HepG2 (cell line): ENCODE measurements at regions of chr1 and their contacts with region 1.

Region 1: DNA sequence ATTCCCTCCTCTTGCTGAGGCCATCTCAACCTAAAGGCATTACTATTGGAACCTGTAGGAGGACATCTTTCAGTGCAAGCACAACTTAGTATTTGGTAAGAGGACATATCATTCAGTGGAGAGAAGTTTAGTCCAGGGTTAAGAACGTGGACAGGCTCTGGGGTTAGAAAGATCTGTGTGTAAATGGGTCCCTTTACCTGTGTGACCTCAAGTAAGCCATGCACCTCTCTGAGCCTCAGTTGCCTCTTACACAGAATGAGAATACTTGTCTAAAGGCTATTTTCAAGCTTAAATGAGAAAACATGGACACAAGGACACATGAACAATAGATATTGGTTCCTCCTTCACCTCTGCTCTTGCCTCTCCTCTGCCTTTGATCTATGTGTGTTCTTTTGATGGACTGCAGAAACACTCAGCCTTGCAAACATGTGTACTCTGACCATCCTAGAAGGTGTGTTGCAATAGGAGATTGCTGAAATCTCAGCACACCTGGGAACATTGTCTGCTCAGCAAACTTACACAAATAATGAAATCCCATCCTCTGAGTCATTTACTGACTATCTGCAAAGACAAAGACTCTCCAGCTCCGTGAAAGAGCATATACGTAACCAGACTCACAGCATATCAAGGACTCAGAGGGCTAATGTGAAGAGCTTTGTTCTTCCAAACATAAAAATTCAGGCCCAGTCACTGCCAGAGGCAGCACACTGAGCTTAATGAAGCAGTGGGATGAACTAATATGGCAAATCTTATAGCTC is 143.8 kb downstream of the DAB1 start:
- DNase-seq: peak; percentile 100
- ATAC-seq: peak; percentile 95
- H3K4me3 ChIP-seq: peak overlapping the region in 1 of 3 experiments; percentile 7; a peak in 1 of 6 replicates
- H3K27ac ChIP-seq: peak overlapping the region; percentile 90
- H3K4me1 ChIP-seq: peaks cover 54% of the 10 kb centered on the region
- H3K27me3 ChIP-seq: no peaks in the 10 kb centered on the region
- CTCF ChIP-seq: no peak
- EP300 ChIP-seq: peak; percentile 99 to 100
- POLR2A ChIP-seq: peak in 1 of 2 experiments; percentile 63; a peak in 1 of 4 replicates
- RAD21 ChIP-seq: no peak

Region 2: DNA sequence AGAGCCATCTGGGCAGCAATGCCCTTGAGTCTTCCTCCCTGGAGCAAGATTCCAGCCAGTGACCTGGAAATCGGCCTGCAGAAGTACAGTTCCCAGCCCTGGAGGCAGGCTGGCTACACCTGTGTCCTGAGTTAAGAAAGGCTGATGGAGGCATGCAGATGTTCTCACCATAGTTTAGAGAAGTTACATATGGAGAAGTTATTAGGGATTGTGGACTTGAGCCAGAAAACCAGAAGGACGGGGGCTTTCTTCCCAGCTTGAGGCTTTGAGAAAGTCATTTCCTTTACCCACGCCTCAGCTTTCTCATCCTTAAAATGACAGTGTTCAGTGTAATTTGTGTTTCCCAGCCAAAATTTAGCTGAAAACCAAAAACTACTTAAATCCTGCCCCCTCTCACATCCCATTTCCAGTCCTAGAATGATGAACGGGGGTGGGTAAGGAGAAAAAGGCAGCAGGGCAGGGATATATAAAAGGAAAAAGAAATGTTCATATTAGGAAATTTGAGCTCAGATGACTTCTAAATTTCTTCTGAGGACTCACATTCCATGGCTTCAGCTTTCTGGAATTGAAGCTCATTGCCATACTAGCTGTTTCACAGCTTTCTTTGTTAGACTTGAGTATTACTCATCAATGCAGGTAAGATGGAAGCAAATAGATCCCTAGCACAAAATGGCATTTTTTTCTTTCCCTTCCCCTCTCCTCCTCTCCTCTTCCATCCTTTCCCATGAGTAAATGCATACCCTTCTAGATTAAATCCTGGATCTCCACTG is 299.9 kb before region 1 on chr1:
- CTCF ChIA-PET with region 1: no interaction called
- POLR2A ChIA-PET with region 1: no interaction called
- in situ Hi-C with region 1: no loop called
- intact Hi-C with region 1: loop called (anchors 10 kb)
- DNase-seq: no peak
- ATAC-seq: no peak
- H3K4me3 ChIP-seq: no peak overlapping the region
- H3K27ac ChIP-seq: no peak overlapping the region
- H3K4me1 ChIP-seq: peaks cover 1% of the 10 kb centered on the region
- H3K27me3 ChIP-seq: no peaks in the 10 kb centered on the region
- CTCF ChIP-seq: no peak
- EP300 ChIP-seq: no peak
- POLR2A ChIP-seq: no peak
- RAD21 ChIP-seq: no peak

Region 3: DNA sequence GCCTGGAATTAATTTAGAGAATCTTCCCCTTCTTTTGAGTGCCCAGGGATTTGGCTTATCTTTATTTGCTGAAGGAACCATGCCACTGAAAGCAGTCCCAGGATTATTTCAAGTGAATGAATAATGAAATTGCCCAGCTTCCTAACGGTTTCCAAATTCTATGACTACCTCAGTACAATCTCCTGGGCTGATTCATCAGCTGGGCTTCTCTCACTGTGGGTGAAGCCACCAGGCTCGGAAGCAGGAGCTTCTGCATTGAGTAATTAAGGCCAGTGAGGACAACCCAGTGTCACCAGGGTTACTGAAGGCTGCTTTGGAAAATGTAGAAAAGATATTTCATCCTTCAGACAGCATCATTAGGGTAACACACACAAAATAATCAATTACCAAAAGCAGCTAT is 26.1 kb before region 1 on chr1:
- CTCF ChIA-PET with region 1: no interaction called
- POLR2A ChIA-PET with region 1: no interaction called
- in situ Hi-C with region 1: no loop called
- intact Hi-C with region 1: no loop called
- DNase-seq: no peak
- ATAC-seq: no peak
- H3K4me3 ChIP-seq: no peak overlapping the region
- H3K27ac ChIP-seq: no peak overlapping the region
- H3K4me1 ChIP-seq: no peaks in the 10 kb centered on the region
- H3K27me3 ChIP-seq: no peaks in the 10 kb centered on the region
- CTCF ChIP-seq: no peak
- EP300 ChIP-seq: no peak
- POLR2A ChIP-seq: no peak
- RAD21 ChIP-seq: no peak

Region 4: GRCh38 chr1:57311006-57311405 is 30.9 kb after region 1 on chr1:
- CTCF ChIA-PET with region 1: no interaction called
- POLR2A ChIA-PET with region 1: interaction called, 12 read pairs
- in situ Hi-C with region 1: no loop called
- intact Hi-C with region 1: no loop called
- DNase-seq: peak; percentile 39
- ATAC-seq: peak; percentile 75
- H3K4me3 ChIP-seq: no peak overlapping the region
- H3K27ac ChIP-seq: no peak overlapping the region
- H3K4me1 ChIP-seq: peaks cover 39% of the 10 kb centered on the region
- H3K27me3 ChIP-seq: no peaks in the 10 kb centered on the region
- CTCF ChIP-seq: no peak
- EP300 ChIP-seq: no peak
- POLR2A ChIP-seq: no peak
- RAD21 ChIP-seq: no peak